Activated CD4-positive, alpha-beta memory T cell treated with anti-CD3 and anti-CD28 coated beads, Interleukin-2, amount 10 ng/mL, durations not matched to agents 7 days and 5 days (primary cell): ENCODE measurements at regions of chr2 and their contacts with region 1.

Region 1: DNA sequence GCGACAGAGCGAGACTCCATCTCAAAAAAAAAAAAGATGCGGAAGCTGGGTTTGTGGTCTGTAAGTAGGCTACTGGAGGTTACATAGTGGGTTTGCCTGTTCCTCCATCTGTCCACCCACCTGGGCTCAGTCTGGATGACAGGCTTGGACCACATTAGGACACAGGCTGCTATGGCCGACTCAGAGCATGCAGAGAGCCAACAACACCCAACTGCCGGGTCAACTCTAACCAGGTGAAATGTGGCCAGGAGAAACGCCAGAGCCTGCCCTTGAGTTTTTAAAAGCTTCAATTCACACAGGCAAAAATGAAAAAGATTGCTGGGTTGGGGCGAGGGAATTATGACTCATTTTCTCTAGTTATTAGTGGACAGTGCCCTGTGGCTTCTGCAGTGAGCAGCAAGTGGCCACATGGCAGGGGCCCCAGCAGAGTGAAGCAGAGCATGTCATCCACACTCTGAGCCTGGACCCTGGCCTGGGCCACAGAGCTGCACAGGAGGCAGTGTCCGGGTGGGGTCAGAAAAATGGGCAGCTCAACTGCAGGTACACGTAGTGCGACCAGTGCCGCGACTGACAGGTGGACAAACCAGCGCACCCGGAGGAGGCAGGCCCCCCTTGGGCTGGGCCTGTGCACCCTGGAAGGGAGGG is 67.4 kb downstream of the BIN1 start:
- DNase-seq: no peak
- H3K4me3 Mint-ChIP-seq: no peak overlapping the region
- H3K27ac Mint-ChIP-seq: no peak overlapping the region
- H3K4me1 Mint-ChIP-seq: peaks cover 12% of the 10 kb centered on the region
- H3K27me3 Mint-ChIP-seq: no peaks in the 10 kb centered on the region

Region 2: GRCh38 chr2:126945118-126945517 is 94.4 kb before region 1 on chr2:
- CTCF ChIA-PET with region 1: no interaction called
- POLR2A ChIA-PET with region 1: no interaction called
- DNase-seq: no peak
- H3K4me3 Mint-ChIP-seq: no peak overlapping the region
- H3K27ac Mint-ChIP-seq: no peak overlapping the region
- H3K4me1 Mint-ChIP-seq: no peaks in the 10 kb centered on the region
- H3K27me3 Mint-ChIP-seq: peaks cover 7% of the 10 kb centered on the region

Region 3: GRCh38 chr2:127025359-127026166 is 13.9 kb before region 1 on chr2:
- CTCF ChIA-PET with region 1: no interaction called
- POLR2A ChIA-PET with region 1: no interaction called
- DNase-seq: peak; percentile 84
- H3K4me3 Mint-ChIP-seq: peak overlapping the region; percentile 75
- H3K27ac Mint-ChIP-seq: peak overlapping the region; percentile 34
- H3K4me1 Mint-ChIP-seq: peaks cover 18% of the 10 kb centered on the region
- H3K27me3 Mint-ChIP-seq: peaks cover 44% of the 10 kb centered on the region

Region 4: GRCh38 chr2:127049927-127050802 is 10.7 kb after region 1 on chr2:
- CTCF ChIA-PET with region 1: interaction called, 14 read pairs
- POLR2A ChIA-PET with region 1: no interaction called
- DNase-seq: peak; percentile 65
- H3K4me3 Mint-ChIP-seq: no peak overlapping the region
- H3K27ac Mint-ChIP-seq: no peak overlapping the region
- H3K4me1 Mint-ChIP-seq: peaks cover 2% of the 10 kb centered on the region
- H3K27me3 Mint-ChIP-seq: no peaks in the 10 kb centered on the region

Region 5: GRCh38 chr2:127128445-127128904 is 89.0 kb after region 1 on chr2:
- CTCF ChIA-PET with region 1: no interaction called
- POLR2A ChIA-PET with region 1: no interaction called
- DNase-seq: peak; percentile 14
- H3K4me3 Mint-ChIP-seq: no peak overlapping the region
- H3K27ac Mint-ChIP-seq: no peak overlapping the region
- H3K4me1 Mint-ChIP-seq: no peaks in the 10 kb centered on the region
- H3K27me3 Mint-ChIP-seq: no peaks in the 10 kb centered on the region

Region 6: GRCh38 chr2:127408004-127408806 is 368.7 kb after region 1 on chr2:
- CTCF ChIA-PET with region 1: no interaction called
- POLR2A ChIA-PET with region 1: no interaction called
- DNase-seq: peak; percentile 89
- H3K4me3 Mint-ChIP-seq: peak overlapping the region; percentile 58
- H3K27ac Mint-ChIP-seq: peak overlapping the region; percentile 11
- H3K4me1 Mint-ChIP-seq: peaks cover 31% of the 10 kb centered on the region
- H3K27me3 Mint-ChIP-seq: peaks cover 13% of the 10 kb centered on the region